ENCODE measurements at regions of chr3 and their contacts with region 1.

Region 1: DNA sequence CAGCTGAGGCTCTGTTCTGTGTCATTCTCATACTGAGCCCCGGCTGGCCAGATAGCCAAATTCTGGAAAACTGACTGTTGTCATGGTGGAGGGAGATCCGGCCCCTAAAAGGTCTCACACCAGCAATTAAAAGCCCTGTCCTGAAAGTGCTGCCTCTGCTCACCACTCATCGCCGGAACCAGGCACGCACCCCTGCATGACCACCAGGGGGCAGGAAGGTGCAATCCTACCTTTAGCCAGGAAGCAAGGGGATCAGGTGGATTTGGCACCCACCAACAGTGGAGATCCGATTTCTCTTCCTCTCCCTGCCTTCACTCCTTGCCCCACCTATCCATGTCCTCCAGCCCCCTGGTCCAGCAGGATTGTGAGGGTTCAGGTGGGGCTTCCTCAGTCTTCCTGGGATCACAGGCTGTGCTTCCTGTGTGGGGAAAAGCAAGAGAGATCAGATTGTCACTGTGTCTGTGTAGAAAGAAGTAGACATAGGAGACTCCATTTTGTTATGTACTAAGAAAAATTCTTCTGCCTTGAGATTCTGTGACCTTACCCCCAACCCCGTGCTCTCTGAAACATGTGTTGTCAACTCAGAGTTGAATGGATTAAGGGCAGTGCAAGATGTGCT is 16.1 kb upstream of the CACNA2D2 start:
- DNase-seq: no peak
- H3K4me3 ChIP-seq: no peak overlapping the region
- H3K27me3 ChIP-seq: peaks cover 16% of the 10 kb centered on the region
- CTCF ChIP-seq: peak; percentile 94

Region 2: DNA sequence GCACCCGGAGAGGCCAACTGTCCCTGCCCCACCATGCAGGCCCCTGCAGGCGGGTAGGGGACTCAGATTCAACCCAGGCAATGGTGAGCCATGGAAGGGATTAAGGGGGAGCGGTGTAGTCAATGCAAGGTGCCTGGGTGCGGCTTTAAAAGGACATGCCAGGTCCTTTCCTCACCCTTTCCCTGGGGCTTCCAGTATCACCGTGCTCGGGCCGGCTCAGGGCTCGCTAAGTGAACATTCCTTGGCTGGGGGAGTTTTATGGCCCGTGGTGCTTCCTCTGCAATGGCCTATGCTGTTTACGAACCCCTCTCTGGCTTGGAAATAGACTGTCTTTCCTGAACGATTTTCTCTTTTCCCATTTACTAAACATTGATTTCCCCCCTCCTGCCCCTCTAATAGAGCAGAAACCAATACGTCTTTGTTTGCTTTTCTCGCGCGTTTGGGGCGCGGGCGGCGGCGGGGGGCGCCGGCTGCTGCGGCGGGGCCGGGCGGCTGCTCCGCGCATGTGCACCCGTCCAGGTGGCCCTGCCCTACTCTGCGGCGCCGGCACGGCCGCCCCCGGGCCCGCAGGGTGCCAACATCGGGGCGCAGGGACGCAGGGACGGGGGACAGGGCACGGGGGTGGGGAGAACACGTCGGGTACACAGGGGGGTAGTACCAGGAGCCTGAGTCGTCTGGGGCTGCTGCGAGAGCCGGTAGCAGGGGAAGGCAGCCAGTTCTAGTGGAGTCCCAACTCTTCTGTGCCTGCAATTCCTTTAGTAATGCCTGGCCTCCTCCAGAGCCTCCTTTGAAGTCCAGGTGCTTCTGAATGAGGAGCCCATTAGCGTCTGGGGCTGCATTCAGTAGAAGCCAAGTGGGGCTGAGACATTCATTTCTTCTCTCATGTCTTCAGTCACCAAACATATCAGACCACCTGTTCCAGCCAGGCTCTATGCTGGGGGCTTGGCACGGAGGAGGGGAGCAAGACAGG is 10.7 kb after region 1 on chr3:
- CTCF ChIA-PET with region 1: interaction called, 13 read pairs
- POLR2A ChIA-PET with region 1: no interaction called
- DNase-seq: no peak
- H3K4me3 ChIP-seq: no peak overlapping the region
- H3K27me3 ChIP-seq: peaks cover 18% of the 10 kb centered on the region
- CTCF ChIP-seq: no peak

Region 3: DNA sequence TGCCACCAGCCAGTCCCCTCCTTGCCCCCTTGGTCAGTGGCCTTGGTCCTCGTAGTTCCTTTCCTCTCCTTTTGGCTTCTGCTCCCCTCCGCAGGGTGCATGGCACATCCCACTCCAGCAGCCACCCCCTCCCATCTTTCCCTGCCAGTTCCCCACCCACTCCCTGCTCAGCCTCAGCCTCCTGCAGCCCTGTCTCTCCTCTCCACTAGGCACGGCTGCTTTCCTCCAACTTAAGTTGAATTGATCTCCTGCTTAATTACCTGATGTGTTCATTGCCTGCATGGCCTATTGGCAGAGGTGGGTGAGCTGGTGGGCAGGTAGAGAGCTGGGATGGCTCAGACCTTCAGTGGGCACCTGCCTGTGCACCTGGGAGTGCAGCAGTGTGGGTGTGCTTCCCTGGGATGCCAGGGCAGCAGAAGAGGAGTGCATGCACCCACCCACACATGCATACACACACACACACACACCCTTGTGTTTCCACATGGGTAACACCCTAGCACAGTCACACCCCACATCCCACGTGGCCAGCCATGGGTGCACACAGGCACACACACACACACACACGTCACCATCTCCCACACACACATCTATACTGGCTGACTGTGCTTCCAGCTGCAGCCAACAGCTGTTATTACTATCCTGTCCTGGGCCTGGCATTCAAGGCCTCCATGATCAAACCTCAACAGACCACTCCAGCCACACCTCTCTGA is 17.0 kb after region 1 on chr3:
- CTCF ChIA-PET with region 1: interaction called, 46 read pairs
- POLR2A ChIA-PET with region 1: no interaction called
- DNase-seq: no peak
- H3K4me3 ChIP-seq: no peak overlapping the region
- H3K27me3 ChIP-seq: peaks cover 14% of the 10 kb centered on the region
- CTCF ChIP-seq: no peak

Region 4: DNA sequence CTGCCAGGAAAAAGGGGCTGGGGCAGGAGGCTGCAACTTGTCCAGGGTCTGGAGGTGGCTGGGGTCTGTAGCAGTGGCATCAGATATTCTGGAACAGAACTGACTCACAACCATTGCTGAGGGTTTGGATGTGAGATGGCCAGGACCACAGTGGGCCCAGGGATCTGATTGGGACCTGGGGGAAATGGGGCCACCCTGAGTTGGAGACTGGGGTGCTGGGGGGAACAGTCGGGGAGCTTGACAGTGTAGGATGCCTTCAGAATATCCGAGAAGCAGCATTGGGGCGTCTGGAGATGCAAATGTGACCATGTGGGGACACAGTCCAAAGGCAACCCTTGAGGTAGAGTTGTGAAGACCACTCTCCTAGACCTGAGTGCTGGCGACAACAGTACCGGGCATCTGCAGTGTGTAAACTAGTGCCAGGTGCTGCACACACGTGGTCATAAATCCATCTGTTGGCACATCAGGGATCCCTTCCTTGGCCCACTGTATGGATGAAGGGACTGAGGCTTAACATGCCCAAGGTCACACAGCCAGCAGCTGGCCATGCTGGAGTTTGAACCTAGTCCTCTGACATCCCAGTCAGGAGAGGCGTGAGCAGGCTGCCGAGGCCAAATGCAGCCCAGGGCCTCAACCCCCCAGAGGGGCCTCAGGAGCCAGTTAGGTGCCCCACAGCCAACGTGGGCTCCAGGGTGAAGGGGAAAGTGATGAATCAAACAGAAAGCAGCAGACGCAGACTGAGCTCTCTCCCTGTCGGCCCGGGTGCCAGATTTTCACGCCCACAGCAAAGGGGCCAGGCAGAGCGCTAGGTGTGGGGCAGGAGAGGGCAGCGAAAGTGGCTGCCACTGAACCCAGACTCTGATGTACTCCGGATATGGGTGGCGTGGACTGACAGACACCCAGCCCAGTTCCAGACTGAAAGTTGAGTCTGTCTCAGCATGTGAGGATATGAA is 68.5 kb after region 1 on chr3:
- CTCF ChIA-PET with region 1: no interaction called
- POLR2A ChIA-PET with region 1: interaction called, 11 read pairs
- DNase-seq: no peak
- H3K4me3 ChIP-seq: no peak overlapping the region
- H3K27me3 ChIP-seq: no peaks in the 10 kb centered on the region
- CTCF ChIP-seq: no peak